ENCODE measurements at regions of chr4 and their contacts with region 1.

Region 1: DNA sequence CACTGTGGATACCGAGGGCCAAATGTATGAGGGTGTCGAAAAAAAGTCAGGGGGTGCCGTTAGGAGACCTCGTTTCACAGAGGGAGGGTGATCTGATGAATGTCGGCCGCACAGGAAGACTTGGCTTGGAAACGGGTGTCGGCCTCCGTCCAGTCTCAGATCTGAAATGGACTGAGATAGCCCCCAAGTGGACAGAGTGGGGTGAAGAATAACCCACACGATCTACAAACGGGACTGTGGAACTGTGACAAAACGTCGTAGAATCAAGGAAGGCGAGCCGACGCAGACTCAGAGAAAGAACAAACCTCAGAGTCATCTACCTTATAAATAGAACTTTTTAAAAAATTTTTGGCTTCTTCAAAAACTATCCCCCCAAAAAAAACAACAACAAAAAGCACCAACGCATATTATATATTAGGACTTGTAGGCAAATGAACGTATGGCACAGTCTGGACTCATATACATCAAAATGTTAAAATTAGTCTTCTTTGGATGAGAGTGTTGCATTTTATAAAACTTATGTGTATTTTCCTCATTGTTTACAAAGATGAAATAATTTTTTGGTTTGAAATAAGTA is 63.8 kb upstream of the IRF2 start:
- DNase-seq: peak; percentile 62 to 94
- H3K4me3 ChIP-seq: peak overlapping the region; percentile 66 to 70
- H3K27ac ChIP-seq: peak overlapping the region; percentile 88 to 89
- H3K4me1 ChIP-seq: peaks cover 2 to 20% of the 10 kb centered on the region in 2 donors
- H3K27me3 ChIP-seq: no peaks in the 10 kb centered on the region
- CTCF ChIP-seq: peak; percentile 51 to 71 (median 69)

Region 2: DNA sequence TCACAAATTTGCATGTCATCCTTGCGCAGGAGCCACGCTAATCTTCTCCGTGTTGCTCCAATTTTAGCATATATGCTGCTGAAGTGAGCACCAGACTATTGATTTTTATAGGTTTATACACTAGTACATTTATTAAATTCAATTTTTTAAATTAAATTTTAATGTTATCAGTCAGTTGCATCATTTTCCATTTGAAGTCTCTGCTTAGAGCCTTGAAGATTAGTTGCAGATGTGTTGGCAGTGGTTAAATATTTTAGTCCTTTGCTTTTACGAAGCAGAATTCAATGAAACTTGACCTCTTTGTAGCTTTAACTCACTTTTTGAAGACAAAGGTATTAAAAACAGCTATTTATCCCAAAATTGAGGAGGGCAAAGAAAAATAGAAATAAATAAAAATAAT is 862.5 kb before region 1 on chr4:
- intact Hi-C with region 1: no loop called
- DNase-seq: no peak
- H3K4me3 ChIP-seq: no peak overlapping the region
- H3K27ac ChIP-seq: no peak overlapping the region
- H3K4me1 ChIP-seq: no peaks in the 10 kb centered on the region
- H3K27me3 ChIP-seq: no peaks in the 10 kb centered on the region
- CTCF ChIP-seq: no peak

Region 3: GRCh38 chr4:184263910-184264732 is 274.0 kb before region 1 on chr4:
- intact Hi-C with region 1: loop called (anchors 1 kb)
- DNase-seq: peak; percentile 46 to 98
- H3K4me3 ChIP-seq: no peak overlapping the region
- H3K27ac ChIP-seq: no peak overlapping the region
- H3K4me1 ChIP-seq: peaks cover 0 to 2% of the 10 kb centered on the region in 2 donors
- H3K27me3 ChIP-seq: no peaks in the 10 kb centered on the region
- CTCF ChIP-seq: peak; percentile 83 to 92 (median 90)

Region 4: GRCh38 chr4:184343502-184344177 is 194.5 kb before region 1 on chr4:
- intact Hi-C with region 1: loop called (anchors 5 kb)
- DNase-seq: peak; percentile 48 to 85
- H3K4me3 ChIP-seq: peak overlapping the region; percentile 53 to 75
- H3K27ac ChIP-seq: peak overlapping the region in 1 of 2 donors; percentile 58
- H3K4me1 ChIP-seq: no peaks in the 10 kb centered on the region
- H3K27me3 ChIP-seq: no peaks in the 10 kb centered on the region
- CTCF ChIP-seq: no peak

Region 5: DNA sequence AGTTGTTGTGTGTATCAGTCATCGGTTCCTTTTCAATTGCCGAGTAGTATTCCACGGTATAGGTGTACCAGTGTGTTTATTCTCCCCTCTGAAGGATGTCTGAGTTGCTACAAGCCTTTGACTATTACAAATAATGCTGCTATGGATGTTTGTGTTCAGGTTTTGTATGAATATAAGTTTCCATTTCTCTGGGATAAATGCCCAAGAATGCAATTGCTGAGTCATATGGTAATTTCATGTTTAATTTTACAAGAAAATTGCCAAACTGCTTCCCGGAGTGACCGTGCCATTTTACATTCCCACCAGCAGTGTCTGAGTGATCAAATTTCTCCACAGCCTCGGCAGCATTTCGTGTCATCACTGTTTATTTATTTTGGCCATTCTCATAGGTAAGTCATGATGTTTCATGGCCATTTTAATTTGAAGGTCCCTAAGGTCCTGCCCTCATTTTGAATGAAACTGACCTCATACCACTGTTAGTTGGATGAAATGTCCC is 137.7 kb before region 1 on chr4:
- intact Hi-C with region 1: loop called (anchors 2 kb)
- DNase-seq: peak in 1 of 2 donors; percentile 84
- H3K4me3 ChIP-seq: no peak overlapping the region
- H3K27ac ChIP-seq: peak overlapping the region; percentile 66 to 71
- H3K4me1 ChIP-seq: peaks cover 0 to 25% of the 10 kb centered on the region in 2 donors
- H3K27me3 ChIP-seq: no peaks in the 10 kb centered on the region
- CTCF ChIP-seq: peak in 1 of 3 experiments; percentile 15

Region 6: GRCh38 chr4:184733654-184734524 is 195.8 kb after region 1 on chr4 and contains the start of gene CENPU:
- intact Hi-C with region 1: loop called (anchors 5 kb)
- DNase-seq: peak; percentile 87 to 98
- H3K4me3 ChIP-seq: peak within 1 kb of the TSS; percentile 68 to 91
- H3K27ac ChIP-seq: peak within 1 kb of the TSS in 1 of 2 donors; percentile 58
- H3K4me1 ChIP-seq: peaks cover 0 to 8% of the 10 kb centered on the region in 2 donors
- H3K27me3 ChIP-seq: no peaks in the 10 kb centered on the region
- CTCF ChIP-seq: no peak
- total RNA-seq, gene CENPU: not detected

Measured in ascending aorta (tissue), 2 donors.